Heart left ventricle (tissue), 16 donors: ENCODE measurements at regions of chr13 and their contacts with region 1.

Region 1: DNA sequence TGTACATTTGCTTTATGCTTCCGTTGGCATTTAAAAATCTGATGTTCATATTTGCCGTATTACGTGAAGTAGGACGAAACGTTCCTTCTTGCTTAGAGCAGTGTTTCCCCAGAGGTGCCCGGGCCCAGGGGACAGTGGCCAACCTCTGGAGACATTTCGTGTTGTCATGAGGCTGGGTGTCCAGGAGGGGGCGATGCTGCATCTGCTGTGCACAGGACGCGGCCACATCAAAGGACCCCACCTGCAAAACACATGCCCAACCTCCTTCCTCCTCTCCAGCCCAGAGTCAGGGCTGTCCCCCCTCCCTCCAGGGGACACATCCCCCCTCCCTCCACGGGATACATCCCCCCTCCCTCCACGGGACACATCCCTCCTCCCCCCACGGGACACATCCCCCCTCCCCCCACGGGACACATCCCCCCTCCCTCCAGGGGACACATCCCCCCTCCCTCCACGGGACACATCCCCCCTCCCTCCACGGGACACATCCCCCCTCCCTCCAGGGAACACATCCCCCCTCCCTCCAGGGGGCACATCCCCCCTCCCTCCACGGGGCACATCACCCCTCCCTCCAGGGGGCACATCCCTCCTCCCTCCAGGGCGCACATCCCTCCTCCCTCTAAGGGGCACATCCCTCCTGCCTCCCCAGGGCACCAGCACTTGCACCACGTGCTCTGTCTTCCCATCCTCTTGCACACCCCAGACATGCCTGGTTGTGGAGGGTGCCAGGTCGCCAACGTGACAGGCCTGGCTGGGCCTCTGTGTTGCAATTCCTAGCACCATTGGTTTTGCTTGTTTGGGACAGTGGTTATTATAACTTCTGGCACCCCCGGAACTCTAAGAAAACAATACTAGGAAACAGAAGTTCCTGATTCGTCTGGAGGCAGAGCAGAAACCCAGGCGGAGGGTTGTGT is 46.7 kb downstream of the GAS6 start:
- DNase-seq: peak; percentile 83 to 92 (median 88)
- ATAC-seq: peak; percentile 35 to 49 (median 42)
- H3K4me3 ChIP-seq: peak overlapping the region in 5 of 12 donors; percentile 4 to 43 (median 10)
- H3K27ac ChIP-seq: peak overlapping the region; percentile 41 to 87 (median 66)
- H3K4me1 ChIP-seq: peaks cover 18 to 76% (median 63%) of the 10 kb centered on the region in 12 donors
- H3K27me3 ChIP-seq: no peaks in the 10 kb centered on the region
- CTCF ChIP-seq: peak; percentile 72 to 91 (median 83)
- POLR2A ChIP-seq: peak in 1 of 2 donors; percentile 13

Region 2: DNA sequence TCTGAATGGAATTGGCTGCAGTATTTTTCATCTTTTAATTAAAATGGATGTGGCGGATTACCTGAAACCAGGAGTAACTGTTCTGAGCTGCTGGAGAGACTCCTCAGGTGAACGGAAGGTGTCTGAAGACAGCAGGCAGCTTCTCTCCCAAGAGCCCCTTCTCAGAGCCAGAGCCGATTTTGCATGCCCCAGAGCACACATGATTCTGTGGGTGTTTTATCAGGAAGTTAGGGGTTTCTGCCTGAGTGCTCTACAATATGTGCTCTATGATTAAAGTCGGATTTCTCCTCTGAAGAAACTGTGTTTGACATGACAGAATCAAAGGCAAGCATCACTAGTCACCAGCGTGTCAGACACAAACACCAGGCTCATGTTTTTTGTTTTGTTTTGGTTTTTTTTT is 908.9 kb before region 1 on chr13:
- intact Hi-C with region 1: no loop called
- DNase-seq: no peak
- ATAC-seq: no peak
- H3K4me3 ChIP-seq: no peak overlapping the region
- H3K27ac ChIP-seq: no peak overlapping the region
- H3K4me1 ChIP-seq: no peaks in the 10 kb centered on the region
- H3K27me3 ChIP-seq: peaks cover 0 to 28% (median 0%) of the 10 kb centered on the region in 9 donors
- CTCF ChIP-seq: no peak
- POLR2A ChIP-seq: no peak

Region 3: DNA sequence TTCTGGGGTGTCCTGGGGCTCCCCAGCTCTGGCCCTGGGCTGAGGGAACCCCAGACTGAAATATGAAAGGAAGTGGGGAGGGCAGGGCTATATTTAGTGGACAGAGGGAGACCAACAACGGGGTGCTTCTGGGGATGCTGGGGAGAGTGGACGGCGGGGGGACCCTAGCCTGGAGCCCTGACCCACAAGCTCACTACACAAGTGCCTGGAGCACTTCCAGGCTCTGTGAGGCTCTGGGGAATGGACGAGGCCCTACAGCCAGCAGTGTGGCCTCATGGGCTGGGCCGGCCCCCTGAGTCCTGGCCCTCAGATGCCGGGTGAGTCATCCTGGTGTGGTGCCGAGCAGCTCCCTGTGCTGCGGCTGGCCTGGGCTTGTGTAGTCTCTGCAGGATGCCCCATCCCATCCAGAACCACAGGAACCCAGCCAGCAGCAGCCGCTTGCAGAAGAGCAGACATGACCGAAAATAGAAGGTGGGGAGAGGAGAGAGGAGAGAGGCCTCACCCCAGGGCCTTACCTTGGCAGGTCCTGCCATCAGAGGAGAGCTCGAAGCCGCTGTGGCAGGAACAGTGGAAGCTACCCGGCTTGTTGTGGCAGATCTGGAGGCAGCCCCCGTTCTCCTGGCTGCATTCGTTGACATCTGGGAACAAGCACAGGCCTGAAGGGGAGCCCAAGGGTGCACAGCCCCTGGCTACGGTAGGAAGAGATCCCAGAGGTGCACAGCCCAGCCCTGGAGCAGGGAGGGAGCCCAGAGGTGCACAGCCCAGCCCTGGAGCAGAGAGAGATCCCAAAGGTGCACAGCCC is 20.6 kb after region 1 on chr13:
- intact Hi-C with region 1: loop called in 3 of 10 experiments (anchors 1 to 2 kb)
- DNase-seq: peak; percentile 92 to 98 (median 95)
- ATAC-seq: peak; percentile 95 to 97 (median 96)
- H3K4me3 ChIP-seq: peak overlapping the region in 8 of 12 donors; percentile 5 to 43 (median 21)
- H3K27ac ChIP-seq: peak overlapping the region; percentile 8 to 97 (median 86)
- H3K4me1 ChIP-seq: peaks cover 24 to 60% (median 46%) of the 10 kb centered on the region in 12 donors
- H3K27me3 ChIP-seq: no peaks in the 10 kb centered on the region
- CTCF ChIP-seq: no peak
- POLR2A ChIP-seq: no peak

Region 4: DNA sequence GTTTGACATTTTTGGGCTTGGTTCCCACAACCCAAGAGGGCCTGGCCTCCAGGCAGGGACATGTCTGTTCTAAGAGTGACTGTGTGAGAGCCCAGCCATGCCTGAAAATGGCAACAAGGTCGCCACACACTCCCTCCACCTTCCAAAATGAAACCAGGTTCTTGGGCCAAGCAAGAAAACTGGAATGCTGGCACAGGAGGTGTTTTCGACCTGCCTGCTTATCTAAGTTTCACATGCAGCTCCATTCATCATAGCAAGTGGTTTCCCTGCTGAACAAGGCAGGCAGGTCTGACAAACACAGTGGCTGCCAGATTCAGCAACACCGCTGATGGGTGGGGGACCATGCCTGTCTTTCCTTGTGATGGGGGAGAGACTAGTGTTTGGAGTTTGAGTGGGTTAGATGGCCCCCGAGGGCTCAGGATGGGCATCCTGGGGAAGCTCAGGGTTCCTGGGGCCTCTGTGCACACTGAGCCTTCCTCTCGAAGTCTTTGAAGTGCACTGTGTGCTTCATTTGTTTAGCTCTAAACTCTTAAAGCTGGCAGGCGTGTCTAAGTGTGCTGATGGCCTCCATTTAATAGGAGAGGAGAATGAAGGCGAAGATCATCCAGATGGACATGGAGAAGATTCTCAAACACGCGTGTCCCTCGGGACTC is 64.5 kb after region 1 on chr13:
- intact Hi-C with region 1: loop called in 3 of 10 experiments (anchors 1 to 5 kb)
- DNase-seq: peak in 2 of 5 donors; percentile 48 to 59
- ATAC-seq: peak; percentile 10 to 65 (median 45)
- H3K4me3 ChIP-seq: no peak overlapping the region
- H3K27ac ChIP-seq: peak overlapping the region; percentile 56 to 93 (median 82)
- H3K4me1 ChIP-seq: peaks cover 3 to 60% (median 42%) of the 10 kb centered on the region in 12 donors
- H3K27me3 ChIP-seq: no peaks in the 10 kb centered on the region
- CTCF ChIP-seq: no peak
- POLR2A ChIP-seq: no peak

Region 5: GRCh38 chr13:113951246-113951999 is 134.2 kb after region 1 on chr13:
- intact Hi-C with region 1: loop called (anchors 1 to 5 kb)
- DNase-seq: peak; percentile 84 to 92 (median 88)
- ATAC-seq: peak; percentile 82 to 97 (median 94)
- H3K4me3 ChIP-seq: peak overlapping the region in 6 of 12 donors; percentile 8 to 35 (median 24)
- H3K27ac ChIP-seq: peak overlapping the region in 1 of 12 donors; percentile 13
- H3K4me1 ChIP-seq: peaks cover 0 to 20% (median 10%) of the 10 kb centered on the region in 12 donors
- H3K27me3 ChIP-seq: no peaks in the 10 kb centered on the region
- CTCF ChIP-seq: peak; percentile 71 to 93 (median 86)
- POLR2A ChIP-seq: no peak

Region 6: GRCh38 chr13:114234645-114235421 is 417.6 kb after region 1 on chr13 and contains the start of gene CDC16:
- intact Hi-C with region 1: loop called in 1 of 10 experiments (anchors 2 kb)
- DNase-seq: peak; percentile 93 to 96 (median 94)
- ATAC-seq: peak; percentile 91 to 99 (median 98)
- H3K4me3 ChIP-seq: peak within 1 kb of the TSS; percentile 59 to 100 (median 94)
- H3K27ac ChIP-seq: peak within 1 kb of the TSS; percentile 74 to 93 (median 84)
- H3K4me1 ChIP-seq: peaks cover 0 to 22% (median 12%) of the 10 kb centered on the region in 12 donors
- H3K27me3 ChIP-seq: peaks cover 0 to 11% (median 6%) of the 10 kb centered on the region in 9 donors
- CTCF ChIP-seq: peak in 5 of 12 donors; percentile 12 to 34 (median 31)
- POLR2A ChIP-seq: peak in 1 of 2 donors; percentile 72
- total RNA-seq, gene CDC16: 20.0 to 41.7 (median 31.6) TPM